ENCODE measurements at regions of chr3 and their contacts with region 1.

Region 1: DNA sequence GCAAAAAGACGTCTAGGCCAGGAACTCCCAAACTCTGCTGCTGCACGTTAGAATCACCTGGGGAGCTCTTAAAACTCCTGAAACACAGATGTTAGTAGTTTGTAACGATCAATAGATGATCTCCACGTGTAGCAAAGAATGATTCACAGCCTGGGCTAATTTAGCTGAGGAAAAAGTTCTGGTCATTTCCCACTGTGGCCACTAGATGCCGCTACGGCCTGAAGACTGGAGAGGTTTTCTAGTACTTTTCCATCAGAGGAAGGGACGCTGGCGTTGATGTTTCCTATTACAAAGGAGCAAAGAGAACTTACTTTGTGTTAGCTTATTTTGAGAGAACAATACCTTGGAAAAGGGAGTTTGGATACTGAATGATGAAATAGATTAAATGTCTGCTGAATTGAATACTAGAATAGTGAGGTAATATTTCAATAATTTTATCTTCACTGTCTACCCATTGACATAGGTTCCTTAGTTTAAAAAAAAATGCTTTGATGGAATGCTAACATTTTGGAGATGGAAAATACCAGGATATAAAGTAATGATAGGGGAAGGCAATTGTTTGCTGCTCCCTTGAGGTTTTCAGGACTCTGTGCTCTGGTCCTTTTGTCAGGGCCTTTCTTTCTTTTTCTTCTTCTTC is 159.1 kb downstream of the P3H2 start:
- DNase-seq: no peak
- H3K4me3 ChIP-seq: no peak overlapping the region
- H3K27ac ChIP-seq: peak overlapping the region; percentile 53
- H3K4me1 ChIP-seq: peaks cover 4% of the 10 kb centered on the region
- H3K27me3 ChIP-seq: no peaks in the 10 kb centered on the region
- CTCF ChIP-seq: peak; percentile 70 to 91 (median 81)

Region 2: GRCh38 chr3:189813647-189814240 is 147.9 kb before region 1 on chr3:
- dilution Hi-C with region 1: no loop called
- DNase-seq: no peak
- H3K4me3 ChIP-seq: no peak overlapping the region
- H3K27ac ChIP-seq: peak overlapping the region; percentile 39
- H3K4me1 ChIP-seq: peaks cover 27% of the 10 kb centered on the region
- H3K27me3 ChIP-seq: no peaks in the 10 kb centered on the region
- CTCF ChIP-seq: no peak

Region 3: GRCh38 chr3:190224863-190225692 is 263.4 kb after region 1 on chr3:
- dilution Hi-C with region 1: loop called (anchors 25 kb)
- DNase-seq: no peak
- H3K4me3 ChIP-seq: no peak overlapping the region
- H3K27ac ChIP-seq: no peak overlapping the region
- H3K4me1 ChIP-seq: peaks cover 6% of the 10 kb centered on the region
- H3K27me3 ChIP-seq: no peaks in the 10 kb centered on the region
- CTCF ChIP-seq: peak; percentile 32 to 44 (median 41)

Measured in keratinocyte (primary cell).